Activated B cell treated with CpG ODN at 0.5 μM for 24 hours (primary cell): ENCODE measurements at regions of chr9 and their contacts with region 1.

Region 1: DNA sequence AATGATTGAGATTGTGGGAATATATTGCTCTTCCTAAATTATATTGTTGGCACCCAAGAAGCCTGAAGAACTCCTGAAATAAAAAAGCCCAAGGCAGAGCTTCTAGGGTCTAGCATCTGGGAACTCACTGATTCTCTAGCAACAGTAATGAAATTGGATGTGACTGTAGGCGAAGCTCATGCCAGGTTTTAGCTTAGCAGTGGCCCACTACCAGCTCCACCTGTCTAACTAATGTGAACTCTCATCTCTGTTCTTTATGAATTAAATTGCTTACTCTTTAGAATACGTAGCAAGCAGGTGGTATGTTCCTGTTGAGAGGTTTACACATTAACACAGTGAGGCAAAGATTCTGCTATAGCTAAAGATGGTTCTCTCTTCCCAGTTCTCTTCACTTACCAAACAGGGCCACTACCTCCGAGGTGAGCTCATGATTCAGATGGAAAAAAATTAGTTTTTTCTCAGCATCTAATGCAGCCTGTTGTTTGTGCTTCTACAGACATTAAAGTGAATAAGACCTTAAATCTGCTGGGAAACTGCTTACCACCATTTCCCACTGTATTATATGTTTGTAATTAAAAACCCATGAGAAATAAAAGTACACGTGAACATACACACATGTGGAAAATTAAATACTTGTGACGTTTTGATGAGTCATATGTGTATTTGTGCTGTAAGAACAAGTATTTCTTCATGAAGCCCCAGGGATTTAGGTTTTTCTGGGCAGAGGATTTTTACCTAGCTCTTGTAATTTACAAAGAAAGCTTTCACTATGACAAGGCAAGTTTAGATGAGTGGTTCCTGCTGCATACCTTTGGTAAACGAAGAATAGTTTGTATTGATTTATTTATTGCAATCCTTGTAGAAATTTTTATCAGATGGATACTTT is 360.1 kb downstream of the KDM4C start:
- DNase-seq: no peak
- ATAC-seq: peak; percentile 76
- H3K4me3 Mint-ChIP-seq: no peak overlapping the region
- H3K27ac Mint-ChIP-seq: peak overlapping the region; percentile 62
- H3K4me1 Mint-ChIP-seq: peaks cover 38% of the 10 kb centered on the region
- H3K27me3 Mint-ChIP-seq: no peaks in the 10 kb centered on the region
- CTCF ChIP-seq: no peak

Region 2: DNA sequence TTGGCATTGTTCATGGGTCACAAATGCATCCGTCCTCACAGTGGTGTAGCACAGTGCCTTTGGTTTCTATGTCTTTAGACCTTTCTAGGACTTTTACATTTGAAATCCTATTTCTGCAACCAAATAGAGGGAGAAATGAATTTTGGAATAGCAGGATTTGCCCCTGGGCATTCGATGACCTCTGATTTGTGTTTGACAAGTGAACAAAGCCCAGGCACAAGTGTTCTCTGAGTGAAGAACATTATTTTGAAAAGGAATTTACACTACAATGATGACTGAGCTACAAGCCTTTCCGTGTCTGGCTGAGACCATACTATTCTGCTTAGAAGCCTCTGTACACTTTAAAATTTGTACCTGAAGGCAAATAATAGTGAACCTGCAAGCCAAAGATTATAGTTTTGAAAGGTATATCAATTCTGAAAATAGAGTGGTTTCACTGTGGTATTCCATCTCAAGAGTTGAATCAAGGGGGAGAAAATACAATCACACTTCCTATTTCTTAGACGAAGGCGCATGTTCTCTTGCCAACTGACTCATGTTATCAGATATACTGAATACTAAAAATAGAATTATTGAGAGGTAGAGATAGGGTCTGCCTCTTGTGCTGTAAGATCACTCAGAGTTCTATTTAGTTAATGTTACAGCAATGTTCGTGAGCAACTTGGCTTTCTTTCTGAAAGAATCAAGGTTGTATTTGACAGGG is 62.6 kb before region 1 on chr9:
- CTCF ChIA-PET with region 1: no interaction called
- POLR2A ChIA-PET with region 1: no interaction called
- intact Hi-C with region 1: loop called (anchors 10 kb)
- DNase-seq: no peak
- ATAC-seq: no peak
- H3K4me3 Mint-ChIP-seq: no peak overlapping the region
- H3K27ac Mint-ChIP-seq: no peak overlapping the region
- H3K4me1 Mint-ChIP-seq: peaks cover 2% of the 10 kb centered on the region
- H3K27me3 Mint-ChIP-seq: no peaks in the 10 kb centered on the region
- CTCF ChIP-seq: no peak

Region 3: DNA sequence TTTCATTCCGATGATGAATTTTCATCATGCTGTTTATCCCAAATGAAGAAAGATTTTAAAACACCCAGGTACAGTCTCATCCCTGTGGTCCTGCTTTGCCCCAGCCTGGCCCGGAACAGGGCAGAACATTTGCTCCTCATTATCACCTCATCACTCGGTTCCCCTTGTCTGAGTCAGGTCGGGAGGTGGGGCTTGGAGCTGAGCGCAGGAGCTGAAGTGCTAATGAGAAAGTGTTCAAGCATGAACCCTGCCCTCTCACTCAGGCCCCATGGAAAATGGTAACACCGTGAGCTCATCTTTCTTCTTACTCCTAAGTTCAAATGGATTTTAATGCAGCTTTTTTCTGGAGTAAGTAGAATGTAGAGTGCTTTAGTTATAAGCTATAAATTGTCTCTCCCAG is 106.1 kb after region 1 on chr9:
- CTCF ChIA-PET with region 1: no interaction called
- POLR2A ChIA-PET with region 1: no interaction called
- intact Hi-C with region 1: no loop called
- DNase-seq: no peak
- ATAC-seq: no peak
- H3K4me3 Mint-ChIP-seq: no peak overlapping the region
- H3K27ac Mint-ChIP-seq: no peak overlapping the region
- H3K4me1 Mint-ChIP-seq: no peaks in the 10 kb centered on the region
- H3K27me3 Mint-ChIP-seq: peaks cover 9% of the 10 kb centered on the region
- CTCF ChIP-seq: no peak

Region 4: GRCh38 chr9:7266911-7267595 is 149.1 kb after region 1 on chr9:
- CTCF ChIA-PET with region 1: no interaction called
- POLR2A ChIA-PET with region 1: no interaction called
- intact Hi-C with region 1: no loop called
- DNase-seq: no peak
- ATAC-seq: no peak
- H3K4me3 Mint-ChIP-seq: no peak overlapping the region
- H3K27ac Mint-ChIP-seq: no peak overlapping the region
- H3K4me1 Mint-ChIP-seq: no peaks in the 10 kb centered on the region
- H3K27me3 Mint-ChIP-seq: peaks cover 14% of the 10 kb centered on the region
- CTCF ChIP-seq: no peak